BJ (cell line): ENCODE measurements at regions of chr1 and their contacts with region 1.

Region 1: DNA sequence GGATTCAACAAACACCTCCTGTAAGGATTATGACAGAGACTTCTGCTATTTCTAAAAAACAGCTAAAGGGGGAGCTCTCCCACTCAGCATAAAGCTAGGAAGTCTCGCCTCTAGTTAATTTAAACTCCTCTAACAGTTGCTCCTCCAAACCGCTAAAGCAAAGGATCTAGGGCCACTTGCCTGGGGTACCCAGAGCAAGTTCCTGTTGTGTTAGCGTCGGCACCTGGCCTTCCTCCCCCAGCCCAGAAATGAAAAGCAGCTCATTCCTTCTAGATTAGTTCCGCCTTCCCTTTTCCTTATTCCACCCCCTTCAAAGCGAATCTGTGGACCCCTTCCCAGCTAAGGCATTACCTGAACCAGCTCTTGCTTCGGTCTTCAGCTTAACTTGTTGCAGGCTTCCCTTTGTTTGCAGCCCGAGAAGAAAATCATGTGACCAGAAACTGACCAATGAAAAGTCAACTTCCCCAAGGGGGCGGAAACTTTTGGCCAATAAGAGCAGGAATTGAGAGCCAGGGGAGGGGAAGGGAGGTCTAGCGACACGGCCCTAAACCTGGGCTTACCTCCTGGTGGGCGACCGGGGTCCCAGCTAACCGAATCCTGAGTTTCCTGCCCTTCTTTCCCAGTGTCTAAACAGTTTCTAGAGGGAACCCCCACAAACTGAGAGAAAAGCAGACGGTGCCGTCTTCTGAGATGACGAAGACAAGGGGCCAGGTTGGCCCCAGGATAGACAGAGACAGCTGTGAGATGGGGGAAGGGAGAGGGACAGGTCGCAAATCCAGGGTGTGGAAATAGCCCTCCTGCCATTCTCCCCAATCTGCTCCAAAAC is at the start of gene PBXIP1:
- DNase-seq: peak; percentile 80
- H3K4me3 ChIP-seq: peak within 1 kb of the TSS; percentile 52
- H3K27me3 ChIP-seq: no peaks in the 10 kb centered on the region
- CTCF ChIP-seq: peak; percentile 47
- polyA plus RNA-seq, gene PBXIP1: 65.6 and 83.1 TPM in 2 replicates

Region 2: GRCh38 chr1:154493276-154493675 is 462.7 kb before region 1 on chr1:
- CTCF ChIA-PET with region 1: no interaction called
- POLR2A ChIA-PET with region 1: no interaction called
- DNase-seq: no peak
- H3K4me3 ChIP-seq: no peak overlapping the region
- H3K27me3 ChIP-seq: peaks cover 31% of the 10 kb centered on the region
- CTCF ChIP-seq: no peak

Region 3: DNA sequence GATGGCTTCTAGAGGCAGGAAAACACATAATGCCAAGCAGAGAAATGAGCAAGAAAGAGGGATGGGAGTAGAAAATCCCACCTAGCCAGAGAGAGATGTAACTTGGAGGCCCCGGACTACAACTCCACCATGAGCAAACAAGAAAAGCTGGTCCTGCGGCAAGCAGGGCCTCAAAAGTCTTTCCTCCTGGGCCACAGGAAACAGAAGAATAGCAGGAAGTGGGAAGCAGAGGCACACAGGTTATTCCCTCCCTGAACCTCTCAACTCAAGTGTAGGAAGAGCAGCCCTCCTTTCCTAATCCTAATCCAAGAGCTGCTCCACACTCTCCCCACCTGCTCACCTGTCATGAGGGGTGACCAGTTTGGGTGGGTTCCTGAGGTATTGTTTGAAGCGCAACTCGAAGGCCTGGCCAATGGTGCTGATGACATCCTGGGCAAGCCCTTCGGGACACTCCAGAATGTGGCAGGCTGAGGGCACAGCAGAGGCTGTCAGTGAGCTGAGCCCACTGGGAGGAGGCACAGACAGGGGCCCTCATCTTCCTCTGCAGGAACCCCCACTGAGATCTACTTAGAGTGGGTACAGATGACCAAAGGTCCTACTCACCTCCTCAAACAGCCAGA is 11.5 kb after region 1 on chr1:
- CTCF ChIA-PET with region 1: interaction called, 30 read pairs
- POLR2A ChIA-PET with region 1: interaction called, 5 read pairs
- DNase-seq: no peak
- H3K4me3 ChIP-seq: no peak overlapping the region
- H3K27me3 ChIP-seq: no peaks in the 10 kb centered on the region
- CTCF ChIP-seq: no peak

Region 4: GRCh38 chr1:154992721-154993571 is 37.0 kb after region 1 on chr1:
- CTCF ChIA-PET with region 1: interaction called, 54 read pairs
- POLR2A ChIA-PET with region 1: no interaction called
- DNase-seq: no peak
- H3K4me3 ChIP-seq: no peak overlapping the region
- H3K27me3 ChIP-seq: no peaks in the 10 kb centered on the region
- CTCF ChIP-seq: peak; percentile 28

Region 5: GRCh38 chr1:155172732-155173477 is 217.0 kb after region 1 on chr1 and contains the start of gene KRTCAP2:
- CTCF ChIA-PET with region 1: no interaction called
- POLR2A ChIA-PET with region 1: no interaction called
- DNase-seq: peak; percentile 73
- H3K4me3 ChIP-seq: peak within 1 kb of the TSS; percentile 97
- H3K27me3 ChIP-seq: no peaks in the 10 kb centered on the region
- CTCF ChIP-seq: peak; percentile 98
- polyA plus RNA-seq, gene KRTCAP2: 211 and 225 TPM in 2 replicates